Activated T-helper 1 cell treated with anti-CD3 and anti-CD28 coated beads, Interleukin-12 subunit alpha, Interleukin-12 subunit beta, Interleukin-2, Interleukin-4 antibody, amounts not matched to agents 30 ng/mL and 10 ng/mL and 1 ng/mL, durations not matched to agents 14 hours and 24 hours and 36 hours (primary cell): ENCODE measurements at regions of chr1 and their contacts with region 1.

Region 1: GRCh38 chr1:212218911-212219310 is 66.3 kb upstream of the PPP2R5A start:
- DNase-seq: peak; percentile 18
- H3K4me3 Mint-ChIP-seq: peak overlapping the region; percentile 35
- H3K27ac Mint-ChIP-seq: peak overlapping the region; percentile 81
- H3K4me1 Mint-ChIP-seq: peaks cover 31% of the 10 kb centered on the region
- H3K27me3 Mint-ChIP-seq: peaks cover 3% of the 10 kb centered on the region

Region 2: DNA sequence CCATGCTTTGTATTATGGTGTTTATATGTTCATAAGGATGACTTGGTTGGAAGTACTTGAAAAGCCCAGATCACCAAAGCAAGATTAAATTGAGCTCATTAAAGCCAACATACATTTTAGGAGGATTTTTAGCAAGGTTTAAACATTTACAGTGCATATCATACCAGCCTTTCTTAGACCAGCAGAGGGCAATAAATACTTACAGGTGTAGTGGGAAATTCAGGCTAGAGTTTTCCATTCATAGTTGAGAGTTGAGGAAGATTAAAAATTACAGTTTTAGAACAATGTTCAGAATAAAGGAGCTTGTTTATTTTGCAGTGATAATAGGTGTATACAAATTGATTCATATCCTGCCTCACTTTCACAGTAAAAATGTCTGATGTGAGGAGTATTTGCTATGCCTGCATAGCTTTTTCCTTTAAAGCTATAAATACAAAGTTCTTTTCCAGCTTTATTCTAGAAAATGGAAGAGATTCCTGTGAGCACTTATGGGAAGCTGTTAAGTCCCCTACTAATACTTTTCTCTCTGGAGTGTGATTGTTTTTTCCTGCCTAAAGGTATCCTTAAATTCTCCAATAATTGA is 148.1 kb before region 1 on chr1:
- intact Hi-C with region 1: loop called (anchors 10 kb)
- DNase-seq: no peak
- H3K4me3 Mint-ChIP-seq: no peak overlapping the region
- H3K27ac Mint-ChIP-seq: no peak overlapping the region
- H3K4me1 Mint-ChIP-seq: peaks cover 6% of the 10 kb centered on the region
- H3K27me3 Mint-ChIP-seq: no peaks in the 10 kb centered on the region

Region 3: DNA sequence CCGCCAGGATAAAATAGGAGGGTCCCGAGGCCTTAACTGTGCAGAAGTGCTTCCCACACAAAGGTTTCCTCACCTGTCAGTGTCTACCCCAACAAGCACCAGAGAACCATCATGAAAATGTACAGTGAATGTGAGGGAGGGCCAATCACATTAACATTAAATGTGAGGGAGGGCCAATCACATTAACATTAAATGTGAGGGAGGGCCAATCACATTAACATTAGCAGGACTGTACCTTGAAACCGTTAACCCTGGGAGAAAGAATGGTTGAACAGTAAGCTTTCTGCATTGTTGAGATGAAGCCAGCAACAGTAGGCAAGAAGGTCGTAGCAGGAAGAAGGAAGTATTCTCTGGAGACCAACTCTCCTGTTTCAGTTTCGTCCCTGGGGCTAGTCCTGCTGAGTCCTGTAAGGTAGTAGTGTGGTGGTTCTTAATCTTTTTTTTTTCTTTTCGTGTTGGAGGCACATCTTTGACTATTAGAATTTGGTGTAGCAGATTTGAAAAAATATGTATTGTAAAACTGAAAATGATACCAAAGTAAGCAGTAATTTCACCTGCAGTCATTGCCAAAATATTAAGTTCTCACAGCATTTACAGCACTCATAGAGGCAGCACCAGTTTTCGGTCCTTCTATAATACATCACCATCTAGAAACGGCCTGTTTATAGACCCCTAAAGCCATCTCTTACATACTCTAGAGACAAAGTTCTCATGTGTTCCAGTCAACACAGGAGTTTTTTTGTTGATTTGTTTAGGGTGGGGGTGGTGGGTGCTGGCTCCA is 32.3 kb before region 1 on chr1:
- intact Hi-C with region 1: loop called (anchors 2 kb)
- DNase-seq: peak; percentile 16
- H3K4me3 Mint-ChIP-seq: peak overlapping the region; percentile 62
- H3K27ac Mint-ChIP-seq: peak overlapping the region; percentile 88
- H3K4me1 Mint-ChIP-seq: peaks cover 55% of the 10 kb centered on the region
- H3K27me3 Mint-ChIP-seq: no peaks in the 10 kb centered on the region

Region 4: GRCh38 chr1:212256369-212256768 is 37.5 kb after region 1 on chr1:
- intact Hi-C with region 1: loop called (anchors 1 kb)
- DNase-seq: peak; percentile 53
- H3K4me3 Mint-ChIP-seq: peak overlapping the region; percentile 27
- H3K27ac Mint-ChIP-seq: peak overlapping the region; percentile 83
- H3K4me1 Mint-ChIP-seq: peaks cover 73% of the 10 kb centered on the region
- H3K27me3 Mint-ChIP-seq: no peaks in the 10 kb centered on the region

Region 5: DNA sequence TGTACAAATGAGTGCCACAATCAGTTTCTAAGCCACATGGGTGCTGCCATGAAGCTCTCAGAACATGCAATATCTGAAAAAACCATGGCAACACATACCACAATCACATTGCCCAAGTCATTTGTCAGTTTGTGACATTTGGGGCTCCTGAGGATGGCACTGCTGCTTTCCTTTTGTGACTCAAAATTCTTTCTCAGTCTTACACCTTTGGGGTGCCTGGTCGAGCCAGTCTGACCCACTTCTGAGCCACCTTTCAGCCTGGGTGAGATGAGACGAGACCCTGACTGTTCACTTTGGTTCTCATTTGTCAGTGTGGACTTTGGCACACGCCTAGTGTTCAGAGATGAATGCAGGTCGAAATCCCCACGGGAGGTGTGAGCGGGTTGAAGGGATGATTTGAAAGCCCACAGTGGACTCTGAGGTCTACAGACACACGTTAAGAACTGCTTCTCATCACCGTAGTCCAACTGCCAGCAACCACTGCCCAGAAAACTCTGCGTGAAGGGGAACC is 472.7 kb after region 1 on chr1:
- intact Hi-C with region 1: no loop called
- DNase-seq: peak; percentile 11
- H3K4me3 Mint-ChIP-seq: no peak overlapping the region
- H3K27ac Mint-ChIP-seq: no peak overlapping the region
- H3K4me1 Mint-ChIP-seq: peaks cover 12% of the 10 kb centered on the region
- H3K27me3 Mint-ChIP-seq: peaks cover 3% of the 10 kb centered on the region